ENCODE measurements at regions of chr5 and their contacts with region 1.

Region 1: GRCh38 chr5:171706736-171707440 is 78.7 kb upstream of the SMIM23 start:
- DNase-seq: no peak
- H3K4me3 ChIP-seq: no peak overlapping the region
- H3K27ac ChIP-seq: no peak overlapping the region
- H3K4me1 ChIP-seq: no peaks in the 10 kb centered on the region
- H3K27me3 ChIP-seq: peaks cover 4% of the 10 kb centered on the region in 2 experiments
- CTCF ChIP-seq: no peak
- POLR2A ChIP-seq: no peak

Region 2: GRCh38 chr5:171580502-171581265 is 126.2 kb before region 1 on chr5:
- CTCF ChIA-PET with region 1: no interaction called
- POLR2A ChIA-PET with region 1: no interaction called
- dilution Hi-C with region 1: no loop called
- intact Hi-C with region 1: no loop called
- DNase-seq: no peak
- H3K4me3 ChIP-seq: no peak overlapping the region
- H3K27ac ChIP-seq: no peak overlapping the region
- H3K4me1 ChIP-seq: no peaks in the 10 kb centered on the region
- H3K27me3 ChIP-seq: peaks cover 3 to 5% of the 10 kb centered on the region in 2 experiments
- CTCF ChIP-seq: no peak
- POLR2A ChIP-seq: no peak

Region 3: DNA sequence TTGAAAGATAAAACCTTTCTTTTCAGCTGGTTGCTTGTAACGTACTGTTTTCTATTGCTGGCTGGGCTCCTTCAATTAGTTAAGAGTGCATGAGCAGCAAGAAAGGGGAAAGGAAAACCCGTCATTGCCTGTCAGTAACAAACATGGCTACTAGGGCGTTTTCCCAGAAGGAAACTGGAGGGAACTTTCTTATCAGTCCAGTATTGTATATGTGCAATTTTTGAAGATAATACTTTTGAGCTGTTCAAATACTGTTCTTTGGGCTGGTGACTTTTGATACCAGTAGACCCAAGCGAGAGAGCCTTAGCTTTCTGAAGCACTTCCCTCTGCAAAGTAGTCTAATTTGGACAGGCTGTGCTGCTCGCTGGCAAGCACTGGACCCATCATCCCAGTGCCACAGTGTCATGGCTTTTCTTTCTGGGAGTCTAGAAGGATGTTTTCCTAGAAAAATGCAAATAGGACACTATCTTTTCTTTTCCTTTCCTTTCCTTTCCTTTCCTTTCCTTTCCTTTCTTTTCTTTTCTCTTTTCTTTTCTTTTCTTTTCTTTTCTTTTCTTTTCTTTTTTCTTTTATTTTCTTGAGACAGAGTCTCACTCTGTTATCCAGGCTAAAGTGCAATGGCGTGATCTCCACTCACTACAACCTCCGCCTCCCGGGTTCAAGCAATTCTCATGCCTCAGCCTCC is 71.2 kb before region 1 on chr5:
- CTCF ChIA-PET with region 1: no interaction called
- POLR2A ChIA-PET with region 1: no interaction called
- dilution Hi-C with region 1: no loop called
- intact Hi-C with region 1: no loop called
- DNase-seq: no peak
- H3K4me3 ChIP-seq: no peak overlapping the region
- H3K27ac ChIP-seq: no peak overlapping the region
- H3K4me1 ChIP-seq: no peaks in the 10 kb centered on the region
- H3K27me3 ChIP-seq: no peaks in the 10 kb centered on the region
- CTCF ChIP-seq: no peak
- POLR2A ChIP-seq: no peak

Region 4: DNA sequence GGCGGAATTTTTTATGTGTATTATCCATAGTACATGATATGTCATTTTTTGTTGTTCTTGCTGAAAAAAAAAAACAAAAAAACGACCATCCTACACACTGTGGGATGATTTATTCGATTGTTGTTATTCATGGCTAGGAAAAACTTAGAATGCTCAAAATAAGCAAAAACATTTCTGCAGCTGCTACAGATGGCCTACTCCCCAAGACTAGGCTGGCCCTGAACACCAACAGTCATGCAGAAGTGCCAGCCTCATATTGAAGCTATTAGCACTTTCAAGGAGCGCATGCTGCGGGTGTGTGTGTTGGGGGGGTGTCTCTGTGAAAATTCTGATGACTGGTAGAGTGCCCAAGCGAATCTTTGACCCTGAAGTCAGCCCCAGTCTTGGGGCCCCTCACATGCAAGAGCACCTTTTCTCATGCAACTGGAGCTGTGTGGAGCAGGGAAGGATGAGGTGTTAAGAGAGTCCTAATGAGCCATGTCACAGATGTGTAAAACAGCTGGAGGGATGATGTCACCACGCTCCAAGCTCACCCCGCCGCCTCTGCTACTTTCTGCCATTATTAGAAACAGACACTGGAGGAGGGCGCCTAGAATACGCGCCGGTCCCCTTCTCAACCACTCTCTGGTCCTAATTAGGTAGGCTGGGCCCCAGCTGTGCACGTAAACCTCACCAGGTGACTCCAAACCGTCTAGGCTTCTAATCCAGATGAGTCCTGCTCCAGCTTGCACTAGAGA is 17.7 kb after region 1 on chr5:
- CTCF ChIA-PET with region 1: no interaction called
- POLR2A ChIA-PET with region 1: no interaction called
- dilution Hi-C with region 1: no loop called
- intact Hi-C with region 1: no loop called
- DNase-seq: no peak
- H3K4me3 ChIP-seq: no peak overlapping the region
- H3K27ac ChIP-seq: no peak overlapping the region
- H3K4me1 ChIP-seq: peaks cover 8% of the 10 kb centered on the region
- H3K27me3 ChIP-seq: peaks cover 0 to 7% of the 10 kb centered on the region in 2 experiments
- CTCF ChIP-seq: no peak
- POLR2A ChIP-seq: no peak

Region 5: DNA sequence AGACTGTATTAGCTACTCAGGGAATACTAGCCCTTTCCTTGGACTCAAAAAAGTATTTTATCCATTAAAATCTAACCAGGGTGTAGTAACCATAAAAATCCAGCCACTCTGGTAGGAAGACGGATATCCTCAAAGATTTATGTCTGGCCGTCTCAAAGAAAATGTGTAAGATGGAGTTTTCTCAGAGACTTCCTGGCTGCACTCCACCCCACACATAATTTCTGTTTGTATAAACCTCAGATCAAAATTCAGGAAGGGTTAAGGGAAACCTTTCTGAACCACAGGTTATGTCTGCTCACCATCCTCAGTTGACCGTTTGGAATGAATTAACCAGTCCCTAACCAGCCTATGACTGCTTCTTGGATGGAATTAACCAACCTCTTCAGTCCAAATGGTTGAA is 65.0 kb after region 1 on chr5:
- CTCF ChIA-PET with region 1: no interaction called
- POLR2A ChIA-PET with region 1: no interaction called
- dilution Hi-C with region 1: no loop called
- intact Hi-C with region 1: loop called (anchors 2 kb)
- DNase-seq: peak; percentile 42
- H3K4me3 ChIP-seq: no peak overlapping the region
- H3K27ac ChIP-seq: no peak overlapping the region
- H3K4me1 ChIP-seq: no peaks in the 10 kb centered on the region
- H3K27me3 ChIP-seq: peaks cover 0 to 2% of the 10 kb centered on the region in 2 experiments
- CTCF ChIP-seq: no peak
- POLR2A ChIP-seq: no peak

Measured in endothelial cell of umbilical vein (primary cell).